Lower leg skin (tissue), 4 donors: ENCODE measurements at regions of chr18 and their contacts with region 1.

Region 1: GRCh38 chr18:7272311-7273049 is 41.6 kb downstream of the LRRC30 start:
- DNase-seq: peak; percentile 40 to 87
- H3K4me3 ChIP-seq: no peak overlapping the region
- CTCF ChIP-seq: no peak
- POLR2A ChIP-seq: no peak

Region 2: GRCh38 chr18:6629635-6630140 is 642.8 kb before region 1 on chr18:
- intact Hi-C with region 1: no loop called
- DNase-seq: no peak
- H3K4me3 ChIP-seq: no peak overlapping the region
- CTCF ChIP-seq: no peak
- POLR2A ChIP-seq: no peak

Region 3: DNA sequence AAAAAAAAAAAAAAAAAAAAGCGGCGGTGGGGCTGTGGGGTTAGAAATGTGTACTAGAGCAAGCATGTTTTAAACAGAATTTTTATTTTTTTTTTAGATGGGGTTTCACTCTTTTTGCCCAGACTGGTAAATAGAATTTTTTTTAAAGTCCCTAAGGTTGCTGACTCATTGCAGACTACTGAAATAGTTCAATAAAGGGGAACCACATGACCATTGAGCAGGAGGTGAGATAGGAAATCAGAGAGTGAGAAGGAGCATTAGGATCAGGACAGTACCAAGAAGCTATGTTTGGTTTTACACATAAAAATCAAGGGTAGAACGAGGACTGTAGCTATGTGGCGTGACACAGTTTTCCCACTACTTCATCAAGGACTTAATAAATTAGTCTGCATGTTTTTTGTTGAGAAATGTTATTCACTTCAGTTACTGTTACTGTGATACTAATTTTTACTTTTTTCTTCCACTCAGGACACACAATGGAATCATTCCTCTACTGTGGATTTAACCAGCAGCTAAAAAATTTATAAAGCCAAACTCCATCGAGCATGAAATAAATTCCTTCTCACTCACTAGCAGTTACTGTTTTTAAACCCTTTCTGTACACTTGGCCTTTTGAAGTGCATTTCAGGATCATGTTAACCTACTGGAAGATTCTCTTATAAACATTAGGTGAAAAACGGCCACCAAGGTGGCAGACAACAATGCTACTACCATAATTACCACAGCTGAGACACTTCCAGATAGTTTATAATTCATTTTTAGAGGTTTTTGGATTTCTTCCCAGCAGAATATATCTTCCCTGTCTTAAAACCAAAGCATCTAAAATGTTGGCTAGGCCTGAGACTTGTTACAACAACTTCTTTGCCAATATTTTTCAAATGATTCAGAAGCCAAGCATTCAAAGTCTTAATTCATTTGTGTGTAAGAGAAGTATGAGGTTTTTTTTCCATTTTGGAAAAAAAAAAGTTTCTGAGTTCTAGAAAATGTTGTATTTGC is 188.1 kb before region 1 on chr18:
- intact Hi-C with region 1: no loop called
- DNase-seq: no peak
- H3K4me3 ChIP-seq: no peak overlapping the region
- CTCF ChIP-seq: no peak
- POLR2A ChIP-seq: no peak

Region 4: DNA sequence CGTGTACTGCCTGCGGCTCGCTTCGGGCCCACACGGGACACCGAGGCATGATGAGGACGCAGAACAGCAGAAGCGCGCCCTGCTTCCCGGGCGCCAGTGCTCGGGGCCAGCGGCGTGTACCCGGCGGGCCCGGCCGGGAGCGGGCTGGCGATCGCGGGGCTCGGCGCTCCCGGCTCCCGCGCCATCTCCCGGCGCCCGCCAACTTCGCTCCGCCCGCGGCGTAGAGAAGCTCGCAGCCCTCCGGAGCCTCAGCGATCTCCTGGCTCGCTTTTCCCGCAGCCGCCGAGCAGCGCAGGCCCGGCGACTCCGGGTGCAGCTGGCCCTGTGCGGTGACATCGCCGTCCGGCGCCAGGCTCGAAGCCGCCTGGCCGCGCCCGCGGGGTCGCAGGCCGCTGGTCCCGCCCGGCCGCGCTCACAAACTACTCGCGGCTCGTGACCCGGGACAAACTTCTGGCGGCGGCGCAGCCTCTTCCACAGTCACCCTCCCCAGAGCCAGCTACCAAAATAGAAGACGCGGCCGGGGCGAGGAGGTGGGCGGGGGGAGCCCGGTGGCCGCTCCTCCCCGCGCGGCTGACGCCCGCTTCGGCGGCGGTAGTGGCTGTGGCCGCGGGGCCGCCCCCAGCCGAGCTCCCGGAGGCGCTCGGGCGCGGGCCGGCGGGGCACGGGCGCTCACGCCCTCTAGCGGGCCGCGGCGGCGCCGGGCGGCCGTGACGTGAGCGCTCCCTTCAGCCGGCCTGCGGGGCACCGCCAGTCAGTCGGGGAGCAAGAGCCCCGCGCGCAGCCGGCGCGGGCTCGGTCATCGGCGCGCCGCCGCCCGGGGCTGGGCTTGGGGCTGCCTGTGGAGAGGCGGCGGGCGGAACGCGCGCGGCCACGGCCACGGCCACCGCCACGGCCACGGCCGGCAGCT is 294.3 kb after region 1 on chr18 and contains the start of gene PTPRM:
- intact Hi-C with region 1: loop called (anchors 10 kb)
- DNase-seq: peak; percentile 86 to 98
- H3K4me3 ChIP-seq: peak within 1 kb of the TSS; percentile 58
- CTCF ChIP-seq: no peak
- POLR2A ChIP-seq: no peak
- total RNA-seq, gene PTPRM: 21.4 to 41.8 (median 29.6) TPM